H1 (cell line): ENCODE measurements at regions of chr12 and their contacts with region 1.

Region 1: GRCh38 chr12:79121487-79121886 is 256.9 kb downstream of the SYT1 start:
- DNase-seq: no peak
- H3K4me3 ChIP-seq: no peak overlapping the region
- H3K27ac ChIP-seq: no peak overlapping the region
- H3K4me1 ChIP-seq: no peaks in the 10 kb centered on the region
- H3K27me3 ChIP-seq: no peaks in the 10 kb centered on the region
- CTCF ChIP-seq: peak; percentile 46 to 58 (median 55)
- EP300 ChIP-seq: no peak
- POLR2A ChIP-seq: no peak
- RAD21 ChIP-seq: peak; percentile 62 to 63

Region 2: DNA sequence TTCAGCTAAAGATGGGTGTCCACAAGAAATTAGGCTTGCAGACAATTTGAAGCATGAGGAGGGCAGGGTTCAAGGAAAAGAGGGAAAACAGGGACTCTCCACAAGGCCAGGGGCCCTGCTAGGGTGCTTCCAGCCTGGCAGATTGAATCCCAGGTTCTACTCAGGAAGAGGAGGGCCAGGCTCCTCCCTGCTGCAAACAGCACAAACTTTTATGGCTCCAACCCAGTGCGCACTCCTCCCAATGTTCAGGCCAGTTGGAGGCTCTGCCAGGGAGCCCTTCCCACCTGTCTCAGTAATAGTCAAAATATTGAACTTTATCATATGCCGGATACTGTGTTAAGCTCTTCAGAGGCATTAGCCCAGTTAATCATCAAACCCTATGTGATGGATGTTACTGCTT is 12.5 kb before region 1 on chr12:
- CTCF ChIA-PET with region 1: interaction called, 22 read pairs
- POLR2A ChIA-PET with region 1: no interaction called
- DNase-seq: no peak
- H3K4me3 ChIP-seq: no peak overlapping the region
- H3K27ac ChIP-seq: no peak overlapping the region
- H3K4me1 ChIP-seq: no peaks in the 10 kb centered on the region
- H3K27me3 ChIP-seq: no peaks in the 10 kb centered on the region
- CTCF ChIP-seq: no peak
- EP300 ChIP-seq: no peak
- POLR2A ChIP-seq: no peak
- RAD21 ChIP-seq: no peak